ENCODE measurements at regions of chr18 and their contacts with region 1.

Region 1: GRCh38 chr18:21600526-21601410 is at the start of gene ESCO1:
- DNase-seq: peak; percentile 98
- H3K4me3 ChIP-seq: peak within 1 kb of the TSS; percentile 47 to 89 (median 68)
- H3K27ac ChIP-seq: peak within 1 kb of the TSS; percentile 59
- H3K4me1 ChIP-seq: no peaks in the 10 kb centered on the region
- H3K27me3 ChIP-seq: no peaks in the 10 kb centered on the region
- CTCF ChIP-seq: peak; percentile 97 to 99
- POLR2A ChIP-seq: peak; percentile 83
- total RNA-seq, gene ESCO1: 9.1 and 12.0 TPM in 2 replicates

Region 2: DNA sequence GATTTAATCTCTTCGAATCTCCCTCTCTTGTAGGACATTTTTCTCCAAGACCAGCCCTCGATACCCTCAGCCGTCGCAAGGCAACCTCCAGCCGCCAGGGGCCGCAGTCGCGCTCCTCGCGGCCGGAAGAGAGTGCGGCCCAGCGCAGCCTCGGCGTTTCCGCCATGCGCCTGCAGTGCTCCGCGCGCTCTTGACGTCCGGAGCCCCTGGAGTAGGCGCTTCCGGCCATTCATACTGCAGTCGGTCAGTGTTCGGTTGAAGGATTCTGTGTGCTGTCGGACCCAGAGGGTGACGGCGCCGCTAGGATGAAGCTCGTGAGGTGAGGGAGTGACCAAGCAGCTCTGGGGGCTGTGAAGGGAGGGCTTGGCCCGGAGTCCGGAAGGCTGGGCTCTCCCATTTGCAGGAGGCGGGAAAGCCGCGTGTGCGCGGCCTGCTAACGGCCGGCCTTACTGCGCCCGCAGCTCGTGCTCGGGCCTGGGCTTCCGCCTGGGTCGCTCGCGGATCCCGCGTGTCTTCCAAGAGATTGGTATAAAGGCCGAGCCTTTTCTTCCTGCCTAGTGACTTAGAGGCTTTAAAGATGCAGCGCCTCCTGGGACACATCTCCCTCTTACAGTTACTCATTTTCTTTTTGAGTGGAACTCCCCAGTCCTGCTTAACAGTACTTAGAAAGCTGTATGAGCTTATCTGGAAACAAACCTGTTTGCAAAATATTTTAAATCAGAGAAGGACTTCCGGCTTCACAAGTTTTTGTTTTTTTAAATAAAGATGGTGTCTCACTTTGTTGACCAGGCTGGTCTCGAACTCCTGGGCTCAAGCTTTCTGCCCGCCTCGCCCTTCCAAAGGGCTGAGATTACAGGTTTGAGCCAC is 11.6 kb after region 1 on chr18 and contains the start of gene SNRPD1:
- CTCF ChIA-PET with region 1: interaction called, 55 read pairs
- POLR2A ChIA-PET with region 1: interaction called, 8 read pairs
- dilution Hi-C with region 1: no loop called
- intact Hi-C with region 1: loop called (anchors 1 kb)
- DNase-seq: peak; percentile 96
- H3K4me3 ChIP-seq: peak within 1 kb of the TSS; percentile 57 to 96 (median 86)
- H3K27ac ChIP-seq: peak within 1 kb of the TSS; percentile 90
- H3K4me1 ChIP-seq: peaks cover 20% of the 10 kb centered on the region
- H3K27me3 ChIP-seq: no peaks in the 10 kb centered on the region
- CTCF ChIP-seq: peak; percentile 97 to 98
- POLR2A ChIP-seq: peak; percentile 94
- total RNA-seq, gene SNRPD1: 91.6 and 97.3 TPM in 2 replicates

Measured in endothelial cell of umbilical vein (primary cell).